ENCODE measurements at regions of chr3 and their contacts with region 1.

Region 1: DNA sequence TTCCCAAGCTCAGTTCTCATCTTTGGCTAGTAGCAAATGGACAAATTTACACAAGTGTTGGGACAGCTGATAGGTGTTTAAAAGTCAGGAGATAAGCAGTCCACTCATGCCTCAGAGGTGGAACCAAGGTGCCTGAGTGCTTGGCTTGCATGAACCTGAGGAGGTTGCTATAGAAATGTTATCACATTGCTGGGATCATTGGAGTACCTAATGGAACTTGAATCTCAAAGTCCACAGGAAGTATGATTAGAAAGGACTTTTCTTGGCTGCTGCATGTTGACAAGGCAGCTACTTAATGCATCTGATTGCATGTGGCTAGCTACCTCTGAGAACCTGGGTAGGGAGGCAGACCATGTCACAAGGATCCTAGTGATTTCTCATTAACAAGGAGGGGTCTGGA is 39.5 kb upstream of the C3orf80 start:
- DNase-seq: peak; percentile 73 to 85
- H3K4me3 ChIP-seq: no peak overlapping the region
- H3K4me3 Mint-ChIP-seq: peak overlapping the region; percentile 29
- H3K27ac Mint-ChIP-seq: peak overlapping the region; percentile 90
- H3K4me1 ChIP-seq: peaks cover 75% of the 10 kb centered on the region
- H3K4me1 Mint-ChIP-seq: peaks cover 43% of the 10 kb centered on the region
- H3K27me3 ChIP-seq: no peaks in the 10 kb centered on the region
- H3K27me3 Mint-ChIP-seq: no peaks in the 10 kb centered on the region
- CTCF ChIP-seq: no peak

Region 2: DNA sequence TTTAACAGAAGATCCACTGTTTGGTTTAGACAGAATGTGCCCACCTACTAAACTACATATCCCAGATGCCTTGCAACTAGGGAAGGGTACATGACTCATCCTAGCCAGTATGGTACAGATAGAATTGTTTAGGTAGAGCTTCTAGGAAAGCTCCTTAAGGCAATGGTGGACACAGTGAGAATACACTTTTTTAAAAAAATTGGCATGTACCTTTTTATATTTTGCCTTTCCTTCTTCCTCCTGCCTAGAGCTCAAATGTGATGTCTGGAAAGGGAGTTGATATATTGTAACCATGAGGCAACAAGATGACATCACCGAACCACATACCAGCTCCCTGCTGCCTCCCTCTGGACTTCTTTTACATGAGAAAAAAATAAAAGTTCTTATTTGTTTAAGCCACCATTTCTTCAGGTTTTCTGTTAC is 25.1 kb after region 1 on chr3:
- CTCF ChIA-PET with region 1: interaction called, 7 read pairs
- POLR2A ChIA-PET with region 1: no interaction called
- intact Hi-C with region 1: loop called (anchors 1 kb)
- DNase-seq: peak in 1 of 2 experiments; percentile 51
- H3K4me3 ChIP-seq: no peak overlapping the region
- H3K4me3 Mint-ChIP-seq: no peak overlapping the region
- H3K27ac Mint-ChIP-seq: peak overlapping the region; percentile 65
- H3K4me1 ChIP-seq: peaks cover 3% of the 10 kb centered on the region; the same call in 1 of the 2 replicates
- H3K4me1 Mint-ChIP-seq: peaks cover 9% of the 10 kb centered on the region
- H3K27me3 ChIP-seq: no peaks in the 10 kb centered on the region
- H3K27me3 Mint-ChIP-seq: no peaks in the 10 kb centered on the region
- CTCF ChIP-seq: peak; percentile 19 to 40

Measured in Caco-2 (cell line).